ENCODE measurements at regions of chr7 and their contacts with region 1.

Region 1: DNA sequence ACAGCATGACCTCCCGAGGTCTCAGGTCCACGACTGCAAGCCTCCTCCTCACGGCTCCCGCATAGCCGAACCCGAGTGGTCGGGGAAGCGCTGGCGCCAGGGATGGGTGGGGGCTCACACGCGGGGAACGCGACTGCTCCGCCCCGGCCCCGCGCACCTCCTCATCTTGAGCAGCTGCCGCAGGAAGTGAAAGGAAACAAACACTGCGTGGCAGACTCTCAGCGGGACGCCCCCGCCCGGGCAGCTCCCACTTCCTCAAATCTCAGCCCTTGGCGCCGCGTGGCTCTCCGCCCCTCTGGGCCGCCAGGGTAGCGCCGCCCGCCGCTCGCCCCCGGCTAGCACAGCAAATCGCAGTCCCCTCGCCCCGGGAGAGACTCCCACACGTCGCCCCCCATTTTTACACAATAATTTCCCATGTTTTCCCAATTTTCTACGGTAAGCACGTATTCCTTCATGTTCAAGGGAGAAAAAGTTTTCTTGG is at the start of gene TMEM243:
- DNase-seq: peak; percentile 39 to 90
- H3K4me3 ChIP-seq: peak within 1 kb of the TSS; percentile 95 to 98
- H3K27ac ChIP-seq: peak within 1 kb of the TSS; percentile 90 to 91
- H3K4me1 ChIP-seq: peaks cover 2 to 8% of the 10 kb centered on the region in 2 donors
- H3K27me3 ChIP-seq: no peaks in the 10 kb centered on the region
- CTCF ChIP-seq: peak in 1 of 3 experiments; percentile 5
- total RNA-seq, gene TMEM243: 27.5 TPM

Region 2: GRCh38 chr7:86939197-86939814 is 280.3 kb before region 1 on chr7:
- intact Hi-C with region 1: no loop called
- DNase-seq: no peak
- H3K4me3 ChIP-seq: no peak overlapping the region
- H3K27ac ChIP-seq: no peak overlapping the region
- H3K4me1 ChIP-seq: no peaks in the 10 kb centered on the region
- H3K27me3 ChIP-seq: no peaks in the 10 kb centered on the region
- CTCF ChIP-seq: peak; percentile 38 to 62 (median 61)

Region 3: GRCh38 chr7:87059525-87060287 is 159.9 kb before region 1 on chr7 and contains the start of gene ELAPOR2:
- intact Hi-C with region 1: loop called (anchors 5 kb)
- DNase-seq: peak; percentile 33 to 87
- H3K4me3 ChIP-seq: peak within 1 kb of the TSS; percentile 72 to 98
- H3K27ac ChIP-seq: peak within 1 kb of the TSS in 1 of 2 donors; percentile 45
- H3K4me1 ChIP-seq: peaks cover 0 to 9% of the 10 kb centered on the region in 2 donors
- H3K27me3 ChIP-seq: no peaks in the 10 kb centered on the region
- CTCF ChIP-seq: peak; percentile 44 to 58 (median 53)
- total RNA-seq, gene ELAPOR2: 1.1 TPM

Region 4: GRCh38 chr7:87100326-87100725 is 119.3 kb before region 1 on chr7:
- intact Hi-C with region 1: no loop called
- DNase-seq: no peak
- H3K4me3 ChIP-seq: no peak overlapping the region
- H3K27ac ChIP-seq: no peak overlapping the region
- H3K4me1 ChIP-seq: no peaks in the 10 kb centered on the region
- H3K27me3 ChIP-seq: no peaks in the 10 kb centered on the region
- CTCF ChIP-seq: no peak

Region 5: GRCh38 chr7:87231256-87231655 is 11.7 kb after region 1 on chr7:
- intact Hi-C with region 1: no loop called
- DNase-seq: no peak
- H3K4me3 ChIP-seq: no peak overlapping the region
- H3K27ac ChIP-seq: no peak overlapping the region
- H3K4me1 ChIP-seq: peaks cover 3 to 8% of the 10 kb centered on the region in 2 donors
- H3K27me3 ChIP-seq: no peaks in the 10 kb centered on the region
- CTCF ChIP-seq: no peak

Region 6: DNA sequence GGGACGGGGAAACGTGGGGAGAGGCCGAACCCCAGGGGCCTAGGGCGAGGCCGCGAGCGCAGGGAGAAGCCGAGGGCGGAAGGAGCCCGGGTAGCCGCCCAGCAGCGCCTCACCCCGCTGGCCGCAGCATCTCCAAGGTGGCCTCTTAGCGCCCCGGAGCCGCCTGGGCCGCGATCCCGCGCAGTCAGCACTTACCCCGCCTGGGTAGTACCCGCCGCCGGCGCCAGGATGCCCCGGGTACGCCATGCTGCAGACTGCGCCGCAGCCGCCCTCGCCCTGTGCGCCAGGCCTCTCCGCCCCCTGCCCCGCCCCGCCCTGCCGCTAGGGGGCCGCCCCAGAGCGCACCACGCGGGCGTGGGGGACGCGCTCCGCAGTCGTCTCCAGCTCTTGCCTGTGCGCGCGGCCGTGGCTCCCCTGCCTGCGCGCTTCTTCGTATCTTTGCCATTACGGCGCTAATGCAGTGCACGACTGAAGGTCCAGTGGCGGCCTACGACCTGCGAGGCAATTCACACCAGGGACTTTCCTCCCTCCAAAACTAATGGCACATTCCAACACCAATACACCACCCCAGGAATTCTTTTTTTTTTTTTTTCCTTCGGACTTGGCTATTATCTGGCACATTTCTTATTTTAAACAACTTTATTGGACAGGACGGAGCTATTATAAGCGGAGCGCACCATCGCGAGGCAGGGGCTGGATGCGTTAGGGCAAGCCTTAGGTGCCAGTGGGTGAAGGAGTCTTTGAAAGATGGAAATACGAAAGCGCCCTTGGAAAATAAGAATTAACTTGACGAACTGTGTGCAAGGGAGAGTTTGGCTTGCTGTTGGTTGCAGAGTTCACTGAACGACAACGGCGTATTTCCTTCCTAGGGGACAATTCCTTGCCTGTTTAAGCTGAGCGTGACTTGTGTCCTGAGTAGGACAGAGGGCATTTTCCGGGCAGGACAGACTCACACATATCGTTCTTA is 1000.5 kb after region 1 on chr7 and contains the start of gene SRI:
- intact Hi-C with region 1: loop called (anchors 10 kb)
- DNase-seq: peak; percentile 40 to 93
- H3K4me3 ChIP-seq: peak within 1 kb of the TSS; percentile 82 to 88
- H3K27ac ChIP-seq: peak within 1 kb of the TSS; percentile 86 to 89
- H3K4me1 ChIP-seq: peaks cover 6 to 7% of the 10 kb centered on the region in 2 donors
- H3K27me3 ChIP-seq: no peaks in the 10 kb centered on the region
- CTCF ChIP-seq: peak; percentile 58 to 88 (median 80)
- total RNA-seq, gene SRI: 16.7 TPM

Measured in ascending aorta (tissue), 2 donors.